Heart right ventricle (tissue), 16 donors: ENCODE measurements at regions of chr18 and their contacts with region 1.

Region 1: GRCh38 chr18:31506024-31506742 is 8.2 kb downstream of the DSG2 start:
- DNase-seq: no peak
- ATAC-seq: peak in 5 of 8 donors; percentile 52 to 74 (median 70)
- H3K4me3 ChIP-seq: no peak overlapping the region
- H3K27ac ChIP-seq: no peak overlapping the region
- H3K4me1 ChIP-seq: peaks cover 0 to 10% (median 0%) of the 10 kb centered on the region in 9 donors
- H3K27me3 ChIP-seq: no peaks in the 10 kb centered on the region
- CTCF ChIP-seq: peak in 8 of 9 donors; percentile 23 to 67 (median 56)

Region 2: DNA sequence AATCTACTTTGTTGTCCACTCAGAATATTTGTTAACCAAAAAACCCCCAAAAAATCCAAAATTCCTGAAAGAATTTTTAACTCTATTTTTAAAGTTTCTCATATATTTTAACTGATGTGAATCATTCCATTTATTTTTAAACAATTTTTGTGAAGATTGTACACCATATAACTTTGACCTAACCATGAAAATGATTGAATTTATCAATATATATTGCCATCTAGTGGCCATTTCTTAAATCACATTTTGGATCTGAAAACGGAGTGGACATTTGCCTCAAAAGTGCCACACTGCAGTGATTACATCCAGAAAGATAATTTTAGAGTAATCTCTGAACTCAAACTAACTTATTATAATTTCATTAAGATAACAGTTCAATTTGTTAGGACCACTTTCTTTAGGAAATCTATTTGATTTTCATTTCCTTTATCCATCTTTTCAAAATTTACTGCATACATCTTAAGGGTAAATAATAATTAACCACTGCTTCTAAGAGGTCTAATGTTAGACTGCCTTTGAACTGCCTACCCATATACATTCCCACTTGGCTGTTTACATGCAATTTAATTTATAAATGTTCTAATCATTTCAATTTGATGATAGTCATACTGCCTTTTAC is 534.7 kb before region 1 on chr18:
- intact Hi-C with region 1: loop called in 2 of 10 experiments (anchors 5 to 10 kb)
- DNase-seq: no peak
- ATAC-seq: no peak
- H3K4me3 ChIP-seq: no peak overlapping the region
- H3K27ac ChIP-seq: no peak overlapping the region
- H3K4me1 ChIP-seq: no peaks in the 10 kb centered on the region
- H3K27me3 ChIP-seq: no peaks in the 10 kb centered on the region
- CTCF ChIP-seq: peak; percentile 33 to 73 (median 62)

Region 3: GRCh38 chr18:30999186-30999585 is 507.0 kb before region 1 on chr18:
- intact Hi-C with region 1: loop called in 2 of 10 experiments (anchors 10 kb)
- DNase-seq: no peak
- ATAC-seq: no peak
- H3K4me3 ChIP-seq: no peak overlapping the region
- H3K27ac ChIP-seq: no peak overlapping the region
- H3K4me1 ChIP-seq: no peaks in the 10 kb centered on the region
- H3K27me3 ChIP-seq: peaks cover 0 to 11% (median 0%) of the 10 kb centered on the region in 7 donors
- CTCF ChIP-seq: peak in 6 of 9 donors; percentile 2 to 45 (median 30)

Region 4: DNA sequence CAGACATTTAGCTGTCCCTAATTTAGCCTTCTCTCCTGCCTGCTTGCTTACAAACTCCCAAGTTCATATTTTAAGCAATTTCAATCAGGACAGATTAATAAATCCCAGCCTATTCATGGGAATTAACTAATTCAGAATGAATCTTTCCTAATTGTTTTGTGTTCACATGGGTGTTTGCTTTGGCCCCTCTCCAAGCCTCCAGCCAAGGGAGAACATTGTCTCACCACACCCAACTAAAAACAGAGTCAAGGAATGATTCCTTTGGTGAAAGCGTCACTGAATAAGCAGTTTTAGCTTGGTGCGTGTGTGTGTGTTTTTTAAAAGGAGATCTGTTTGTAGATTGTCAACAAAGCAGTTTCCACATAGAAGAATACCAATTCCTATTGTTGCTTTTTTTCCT is 231.3 kb before region 1 on chr18:
- intact Hi-C with region 1: loop called in 1 of 10 experiments (anchors 10 kb)
- DNase-seq: peak; percentile 33 to 65
- ATAC-seq: peak in 6 of 8 donors; percentile 81 to 93 (median 90)
- H3K4me3 ChIP-seq: no peak overlapping the region
- H3K27ac ChIP-seq: peak overlapping the region in 8 of 10 donors; percentile 11 to 58 (median 36)
- H3K4me1 ChIP-seq: peaks cover 0 to 27% (median 19%) of the 10 kb centered on the region in 9 donors
- H3K27me3 ChIP-seq: no peaks in the 10 kb centered on the region
- CTCF ChIP-seq: no peak

Region 5: GRCh38 chr18:31399306-31400032 is 106.7 kb before region 1 on chr18:
- intact Hi-C with region 1: loop called in 1 of 10 experiments (anchors 10 kb)
- DNase-seq: no peak
- ATAC-seq: no peak
- H3K4me3 ChIP-seq: no peak overlapping the region
- H3K27ac ChIP-seq: no peak overlapping the region
- H3K4me1 ChIP-seq: peaks cover 0 to 23% (median 14%) of the 10 kb centered on the region in 9 donors
- H3K27me3 ChIP-seq: no peaks in the 10 kb centered on the region
- CTCF ChIP-seq: no peak

Region 6: GRCh38 chr18:31424383-31424988 is 81.7 kb before region 1 on chr18:
- intact Hi-C with region 1: loop called in 2 of 10 experiments (anchors 5 to 10 kb)
- DNase-seq: no peak
- ATAC-seq: no peak
- H3K4me3 ChIP-seq: no peak overlapping the region
- H3K27ac ChIP-seq: no peak overlapping the region
- H3K4me1 ChIP-seq: no peaks in the 10 kb centered on the region
- H3K27me3 ChIP-seq: no peaks in the 10 kb centered on the region
- CTCF ChIP-seq: peak in 7 of 9 donors; percentile 40 to 56 (median 48)